ENCODE measurements at regions of chr22 and their contacts with region 1.

Region 1: GRCh38 chr22:45577746-45578523 is 75.3 kb downstream of the FBLN1 start:
- DNase-seq: peak; percentile 52 to 89
- ATAC-seq: peak; percentile 83 to 89
- H3K4me3 ChIP-seq: no peak overlapping the region
- H3K27ac ChIP-seq: peak overlapping the region; percentile 81 to 93
- H3K4me1 ChIP-seq: peaks cover 39% of the 10 kb centered on the region
- CTCF ChIP-seq: peak; percentile 85
- EP300 ChIP-seq: no peak; a peak in 1 of 5 replicates
- POLR2A ChIP-seq: no peak
- RAD21 ChIP-seq: peak; percentile 97

Region 2: GRCh38 chr22:45564349-45565032 is 13.4 kb before region 1 on chr22:
- CTCF ChIA-PET with region 1: interaction called, 31 read pairs
- POLR2A ChIA-PET with region 1: no interaction called
- DNase-seq: no peak
- ATAC-seq: no peak
- H3K4me3 ChIP-seq: no peak overlapping the region
- H3K27ac ChIP-seq: no peak overlapping the region
- H3K4me1 ChIP-seq: no peaks in the 10 kb centered on the region
- CTCF ChIP-seq: no peak
- EP300 ChIP-seq: no peak
- POLR2A ChIP-seq: no peak
- RAD21 ChIP-seq: no peak

Region 3: GRCh38 chr22:45638834-45639746 is 61.2 kb after region 1 on chr22:
- CTCF ChIA-PET with region 1: interaction called, 25 read pairs
- POLR2A ChIA-PET with region 1: no interaction called
- DNase-seq: peak; percentile 90 to 98
- ATAC-seq: peak; percentile 89 to 91
- H3K4me3 ChIP-seq: no peak overlapping the region
- H3K27ac ChIP-seq: peak overlapping the region; percentile 99 to 100
- H3K4me1 ChIP-seq: peaks cover 55% of the 10 kb centered on the region
- CTCF ChIP-seq: 0 out of 3 replicates have a peak, but pooled peaks have one; percentile 8
- EP300 ChIP-seq: peak; percentile 92 to 97
- POLR2A ChIP-seq: no peak
- RAD21 ChIP-seq: peak; percentile 34 to 65; a peak in 4 of 5 replicates

Region 4: GRCh38 chr22:45817745-45818423 is 239.9 kb after region 1 on chr22:
- CTCF ChIA-PET with region 1: interaction called, 10 read pairs
- POLR2A ChIA-PET with region 1: no interaction called
- DNase-seq: no peak
- ATAC-seq: no peak; a peak in 1 of 6 replicates
- H3K4me3 ChIP-seq: no peak overlapping the region
- H3K27ac ChIP-seq: 0 out of 6 replicates have a peak overlapping the region, but pooled peaks of 1 of the 2 experiments have one; percentile 10
- H3K4me1 ChIP-seq: no peaks in the 10 kb centered on the region; the same call in 2 of the 3 replicates
- CTCF ChIP-seq: no peak
- EP300 ChIP-seq: no peak
- POLR2A ChIP-seq: no peak
- RAD21 ChIP-seq: no peak

Region 5: GRCh38 chr22:45911601-45912271 is 333.8 kb after region 1 on chr22:
- CTCF ChIA-PET with region 1: interaction called, 12 read pairs
- POLR2A ChIA-PET with region 1: no interaction called
- DNase-seq: peak; percentile 72 to 96
- ATAC-seq: peak; percentile 55 to 75
- H3K4me3 ChIP-seq: 0 out of 3 replicates have a peak overlapping the region, but pooled peaks have one; percentile 17
- H3K27ac ChIP-seq: peak overlapping the region; percentile 85 to 94
- H3K4me1 ChIP-seq: peaks cover 38% of the 10 kb centered on the region
- CTCF ChIP-seq: peak; percentile 39; the same call in 2 of the 3 replicates
- EP300 ChIP-seq: peak; percentile 85 to 92; a peak in 4 of 5 replicates
- POLR2A ChIP-seq: no peak
- RAD21 ChIP-seq: peak; percentile 36 to 59; a peak in 4 of 5 replicates

Region 6: GRCh38 chr22:45968751-45969413 is 390.9 kb after region 1 on chr22:
- CTCF ChIA-PET with region 1: interaction called, 12 read pairs
- POLR2A ChIA-PET with region 1: no interaction called
- DNase-seq: peak in 1 of 2 experiments; percentile 77
- ATAC-seq: peak in 1 of 2 experiments; percentile 59; a peak in 3 of 6 replicates
- H3K4me3 ChIP-seq: peak overlapping the region; percentile 17; the same call in 1 of the 3 replicates
- H3K27ac ChIP-seq: peak overlapping the region; percentile 77 to 88
- H3K4me1 ChIP-seq: peaks cover 96% of the 10 kb centered on the region
- CTCF ChIP-seq: no peak
- EP300 ChIP-seq: peak; percentile 24 to 53; a peak in 2 of 5 replicates
- POLR2A ChIP-seq: no peak
- RAD21 ChIP-seq: 0 out of 5 replicates have a peak, but pooled peaks of 1 of the 2 experiments have one; percentile 43

Measured in A549 (cell line).